ENCODE measurements at regions of chr2 and their contacts with region 1.

Region 1: GRCh38 chr2:237904801-237905599 is 45.6 kb downstream of the RAMP1 start:
- DNase-seq: no peak
- H3K4me3 Mint-ChIP-seq: peak overlapping the region; percentile 63
- H3K27ac Mint-ChIP-seq: peak overlapping the region; percentile 93
- H3K4me1 Mint-ChIP-seq: peaks cover 61% of the 10 kb centered on the region
- H3K27me3 Mint-ChIP-seq: no peaks in the 10 kb centered on the region

Region 2: DNA sequence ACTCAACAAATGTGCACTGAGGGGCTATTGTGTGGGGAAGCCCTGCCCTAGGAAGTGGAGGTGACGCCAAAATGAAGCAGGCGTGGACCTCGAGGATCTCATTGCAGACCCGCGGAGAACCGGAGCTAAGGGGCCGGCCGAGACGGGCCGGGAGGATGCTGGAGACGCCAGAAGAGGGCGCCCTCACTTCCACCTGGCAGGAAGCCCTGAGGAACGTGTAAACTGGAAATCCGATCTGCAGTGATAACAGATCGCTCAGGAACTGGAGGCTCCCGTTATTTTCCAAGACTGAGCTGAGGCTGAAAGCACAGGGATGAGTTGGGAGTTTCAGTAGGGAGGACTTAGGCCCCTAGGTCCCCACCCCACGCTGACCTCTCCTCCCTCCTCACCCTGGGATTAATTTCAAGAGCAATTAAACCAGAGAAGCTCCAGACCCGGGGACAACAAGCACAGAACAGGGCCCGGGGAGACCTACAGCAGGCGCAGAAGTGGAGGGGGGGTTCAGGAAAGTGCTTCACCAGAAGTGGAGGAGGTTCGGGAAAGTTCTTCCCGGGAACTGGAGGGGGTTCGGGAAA is 483.4 kb before region 1 on chr2:
- intact Hi-C with region 1: loop called (anchors 10 kb)
- DNase-seq: peak; percentile 61
- H3K4me3 Mint-ChIP-seq: peak overlapping the region; percentile 53
- H3K27ac Mint-ChIP-seq: peak overlapping the region; percentile 35
- H3K4me1 Mint-ChIP-seq: peaks cover 26% of the 10 kb centered on the region
- H3K27me3 Mint-ChIP-seq: peaks cover 27% of the 10 kb centered on the region

Measured in activated T-helper 1 cell treated with anti-CD3 and anti-CD28 coated beads, Interleukin-12 subunit alpha, Interleukin-12 subunit beta, Interleukin-2, Interleukin-4 antibody, amounts not matched to agents 30 ng/mL and 10 ng/mL and 1 ng/mL, durations not matched to agents 14 hours and 24 hours and 36 hours (primary cell).